ENCODE measurements at regions of chr6 and their contacts with region 1.

Region 1: GRCh38 chr6:137937834-137938233 is 70.8 kb downstream of the TNFAIP3 start:
- DNase-seq: no peak
- H3K4me3 ChIP-seq: no peak overlapping the region
- CTCF ChIP-seq: no peak
- POLR2A ChIP-seq: no peak

Region 2: GRCh38 chr6:136249811-136250685 is 1687.8 kb before region 1 on chr6 and contains the start of gene MTFR2:
- intact Hi-C with region 1: loop called (anchors 5 kb)
- DNase-seq: peak; percentile 98 to 99
- H3K4me3 ChIP-seq: peak within 1 kb of the TSS; percentile 48
- CTCF ChIP-seq: no peak
- POLR2A ChIP-seq: no peak
- total RNA-seq, gene MTFR2: 0.49 to 1.3 (median 0.76) TPM in 3 of 4 donors, not detected in the other

Region 3: DNA sequence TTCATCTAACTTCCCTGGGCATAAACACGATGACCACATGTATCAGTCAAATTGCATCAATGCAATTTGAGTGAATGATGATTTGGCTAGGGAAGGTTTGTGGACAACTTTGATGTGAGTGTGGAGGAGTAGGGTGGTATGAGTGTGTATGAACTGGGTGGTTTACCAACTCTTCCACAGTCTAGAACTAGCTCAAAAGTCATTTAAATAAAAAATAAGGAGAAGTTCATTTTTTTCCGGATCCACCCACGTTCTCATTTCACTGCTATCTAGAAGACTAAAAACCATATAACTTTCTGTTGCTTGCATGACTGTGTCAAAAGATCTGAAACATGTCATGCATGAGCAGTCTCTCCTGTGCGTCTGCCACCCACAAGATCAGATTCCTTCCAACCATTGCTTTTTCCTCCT is 992.1 kb before region 1 on chr6:
- intact Hi-C with region 1: no loop called
- DNase-seq: no peak
- H3K4me3 ChIP-seq: no peak overlapping the region
- CTCF ChIP-seq: no peak
- POLR2A ChIP-seq: no peak

Region 4: GRCh38 chr6:137512757-137513605 is 424.9 kb before region 1 on chr6:
- intact Hi-C with region 1: no loop called
- DNase-seq: no peak
- H3K4me3 ChIP-seq: no peak overlapping the region
- CTCF ChIP-seq: no peak
- POLR2A ChIP-seq: no peak

Measured in lower leg skin (tissue), 4 donors.